ENCODE measurements at regions of chr2 and their contacts with region 1.

Region 1: DNA sequence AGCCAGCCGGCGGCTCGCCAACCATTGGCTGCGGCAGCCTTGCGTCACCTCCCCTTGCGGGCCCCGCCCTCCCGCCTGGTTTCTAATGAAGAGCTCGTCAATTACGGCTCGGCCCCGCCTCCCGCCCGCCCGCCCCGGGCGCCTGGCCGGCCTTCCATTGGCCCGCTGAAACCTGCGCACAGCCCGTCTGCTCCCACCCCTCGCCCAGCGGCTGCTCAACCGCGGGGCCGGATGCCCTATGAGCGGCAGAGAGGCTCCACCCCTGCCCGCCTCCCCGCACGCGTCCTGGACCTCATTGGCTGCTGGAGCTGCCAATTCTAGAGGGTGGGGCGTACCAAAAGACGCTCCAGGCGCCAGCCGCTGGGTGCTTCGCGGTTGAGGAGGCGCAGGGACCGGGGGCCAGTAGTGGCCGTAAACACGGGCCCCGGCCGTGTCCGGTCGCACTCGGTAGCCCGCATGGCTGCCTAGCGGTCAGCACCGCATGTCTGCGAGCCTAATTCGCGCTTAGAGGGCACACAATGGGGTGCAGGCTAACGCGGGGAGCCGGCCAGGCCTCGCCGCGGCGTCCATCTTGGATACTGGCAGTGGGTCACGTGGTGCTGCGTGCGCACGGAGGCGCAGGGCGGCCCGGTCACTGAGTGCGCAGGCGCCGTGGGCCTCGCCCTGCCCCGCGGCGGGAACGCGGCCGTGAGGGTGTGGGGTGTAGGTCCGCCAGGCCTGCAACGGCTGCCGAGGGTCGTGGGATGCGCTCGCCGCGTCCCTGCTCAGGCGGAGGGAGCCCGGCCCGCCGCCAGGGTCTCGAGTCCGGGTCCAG is 454 bp upstream of the HDAC4 start:
- DNase-seq: peak; percentile 100
- H3K4me3 ChIP-seq: peak overlapping the region; percentile 29 to 78 (median 60)
- H3K27ac ChIP-seq: peak overlapping the region; percentile 97 to 100 (median 100)
- H3K4me1 ChIP-seq: peaks cover 17 to 44% (median 36%) of the 10 kb centered on the region in 6 donors
- H3K27me3 ChIP-seq: no peaks in the 10 kb centered on the region
- CTCF ChIP-seq: peak in 6 of 11 experiments; percentile 6 to 45 (median 22)
- POLR2A ChIP-seq: peak; percentile 95

Region 2: DNA sequence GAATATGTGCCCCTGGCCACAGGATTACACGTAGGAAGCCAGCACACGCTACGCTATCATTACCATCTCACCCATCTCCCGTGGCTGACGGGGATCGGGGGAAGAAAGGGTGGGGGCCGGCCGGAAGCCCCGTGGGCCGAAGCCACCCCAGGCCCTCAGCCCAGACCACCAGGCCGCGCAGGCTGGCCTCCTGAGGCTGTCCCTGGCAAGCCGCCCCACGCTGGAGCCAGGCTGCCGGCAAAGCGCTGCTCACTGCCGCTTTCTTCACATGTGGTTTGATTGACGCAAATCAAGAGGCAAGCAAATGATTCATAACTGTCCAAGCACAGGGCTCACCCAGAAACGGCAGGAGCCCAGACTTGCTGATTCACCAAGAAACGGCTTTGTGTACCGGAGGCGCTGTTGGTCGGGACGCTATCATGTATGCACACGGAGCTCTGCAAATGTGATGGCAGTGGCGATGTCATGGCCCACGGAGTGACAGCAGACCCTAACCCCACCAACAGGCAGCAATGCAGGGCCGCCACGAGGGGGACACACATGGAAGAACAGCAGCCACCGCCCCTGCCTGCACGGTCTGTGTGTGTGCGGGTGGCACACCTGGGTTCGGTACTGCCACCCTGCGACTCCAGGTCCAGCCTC is 126.1 kb before region 1 on chr2:
- intact Hi-C with region 1: loop called (anchors 10 kb)
- DNase-seq: peak; percentile 93
- H3K4me3 ChIP-seq: peak overlapping the region in 5 of 8 donors; percentile 1 to 54 (median 12)
- H3K27ac ChIP-seq: peak overlapping the region; percentile 39 to 94 (median 85)
- H3K4me1 ChIP-seq: peaks cover 9 to 97% (median 57%) of the 10 kb centered on the region in 6 donors
- H3K27me3 ChIP-seq: peaks cover 0 to 17% (median 0%) of the 10 kb centered on the region in 7 donors
- CTCF ChIP-seq: peak in 4 of 11 experiments; percentile 19 to 26 (median 22)
- POLR2A ChIP-seq: no peak

Region 3: DNA sequence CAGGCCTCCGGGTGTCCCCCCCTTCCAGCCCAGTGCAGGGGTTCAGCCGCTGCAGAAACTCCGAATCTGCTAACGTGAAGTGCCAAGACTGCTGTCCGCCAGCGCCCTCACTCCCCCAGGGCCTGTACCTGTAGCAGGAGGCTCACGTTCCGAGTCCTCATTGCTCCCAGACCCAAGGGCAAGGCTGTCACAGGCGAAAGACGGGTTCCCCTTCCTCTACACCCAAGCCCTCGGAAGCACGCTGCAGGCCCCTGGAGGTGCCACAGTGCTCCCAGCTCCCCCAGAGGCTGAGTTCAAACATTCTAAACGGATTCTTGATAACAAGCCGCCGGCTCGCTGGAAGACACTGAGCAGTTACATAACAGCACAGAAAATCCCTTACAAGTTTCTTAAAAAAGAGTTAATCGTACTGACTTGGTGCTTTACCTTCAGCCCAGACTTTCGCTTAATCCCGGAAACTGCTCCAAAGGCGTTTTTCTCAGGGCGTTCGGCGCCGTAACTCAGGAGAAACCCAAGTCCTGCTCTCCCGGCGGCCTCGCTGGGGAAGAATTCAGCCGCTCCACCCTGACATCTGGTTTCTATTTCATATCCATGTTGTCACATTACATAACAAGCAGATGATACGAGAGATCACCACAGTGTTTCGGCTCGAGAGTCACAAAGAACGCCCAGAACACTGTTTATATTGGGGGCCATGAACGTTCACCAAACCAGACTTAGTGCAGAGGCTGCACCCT is 92.4 kb before region 1 on chr2:
- intact Hi-C with region 1: no loop called
- DNase-seq: peak; percentile 71
- H3K4me3 ChIP-seq: peak overlapping the region in 6 of 8 donors; percentile 4 to 54 (median 20)
- H3K27ac ChIP-seq: peak overlapping the region; percentile 48 to 86 (median 71)
- H3K4me1 ChIP-seq: peaks cover 5 to 95% (median 51%) of the 10 kb centered on the region in 6 donors
- H3K27me3 ChIP-seq: no peaks in the 10 kb centered on the region
- CTCF ChIP-seq: no peak
- POLR2A ChIP-seq: no peak